Activated naive CD4-positive, alpha-beta T cell treated with anti-CD3 and anti-CD28 coated beads for 36 hours (primary cell): ENCODE measurements at regions of chr12 and their contacts with region 1.

Region 1: DNA sequence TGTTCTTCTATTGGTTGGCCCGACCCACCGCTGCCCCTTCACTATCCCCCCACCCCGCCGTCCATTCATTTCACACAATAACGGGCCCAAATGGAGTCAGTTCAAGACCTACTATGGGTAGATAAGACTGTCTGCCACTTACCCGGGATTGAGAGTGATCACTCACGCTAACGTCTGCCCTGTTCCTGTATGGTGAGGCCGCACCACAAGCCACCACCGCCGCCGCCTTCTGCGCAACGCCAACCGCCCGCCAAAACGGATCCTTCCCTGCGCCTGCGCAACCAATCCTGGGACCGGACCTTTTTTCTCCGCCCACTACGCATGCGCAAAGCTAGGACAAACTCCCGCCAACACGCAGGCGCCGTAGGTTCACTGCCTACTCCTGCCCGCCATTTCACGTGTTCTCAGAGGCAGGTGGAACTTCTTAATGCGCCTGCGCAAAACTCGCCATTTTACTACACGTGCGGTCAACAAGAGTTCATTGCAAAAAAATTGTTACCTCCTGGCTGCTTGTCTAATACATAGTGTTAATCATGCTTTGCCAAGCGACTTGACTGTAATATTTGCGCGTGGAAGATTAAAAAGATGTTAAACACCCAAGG is at the start of gene CBX5:
- DNase-seq: peak; percentile 100
- H3K4me3 Mint-ChIP-seq: no peak within 1 kb of the TSS
- H3K27ac Mint-ChIP-seq: no peak within 1 kb of the TSS
- H3K4me1 Mint-ChIP-seq: peaks cover 53% of the 10 kb centered on the region
- H3K27me3 Mint-ChIP-seq: no peaks in the 10 kb centered on the region
- total RNA-seq, gene CBX5: 169 to 173 TPM

Region 2: DNA sequence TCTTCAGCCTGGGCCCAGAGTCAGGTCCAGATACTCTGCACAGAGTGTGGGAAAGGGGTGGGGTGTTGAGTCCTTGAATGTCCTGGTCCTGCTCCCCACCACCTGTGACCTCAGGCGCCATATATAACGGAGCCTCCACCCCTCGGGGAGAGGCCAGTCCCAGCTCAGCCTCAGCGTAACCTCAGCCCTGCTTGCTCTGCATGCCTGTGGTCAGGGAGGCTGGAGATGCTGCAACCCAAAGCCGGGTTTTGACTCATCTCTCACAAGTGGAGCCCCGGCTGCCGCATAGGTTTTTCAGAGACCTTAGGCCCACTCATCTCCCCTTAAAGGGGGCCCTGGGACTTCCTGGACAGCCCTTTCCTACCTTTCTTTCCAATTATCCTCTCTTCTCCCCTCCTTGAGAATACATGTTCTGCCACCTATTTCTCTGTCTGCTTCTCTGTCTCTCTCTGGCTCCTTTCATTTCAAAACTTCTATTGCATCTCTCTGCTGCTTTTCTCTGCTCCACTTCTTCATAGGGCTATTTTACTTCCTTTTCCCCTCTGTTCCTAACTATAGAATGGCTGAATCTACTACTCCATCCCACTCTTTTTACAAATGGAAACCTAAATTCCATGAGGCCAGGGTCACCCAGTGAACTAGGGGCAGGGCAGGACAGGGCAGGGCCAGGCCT is 1074.1 kb before region 1 on chr12:
- CTCF ChIA-PET with region 1: no interaction called
- intact Hi-C with region 1: loop called (anchors 5 kb)
- DNase-seq: peak; percentile 88
- H3K4me3 Mint-ChIP-seq: peak overlapping the region; percentile 65
- H3K27ac Mint-ChIP-seq: peak overlapping the region; percentile 79
- H3K4me1 Mint-ChIP-seq: peaks cover 75% of the 10 kb centered on the region
- H3K27me3 Mint-ChIP-seq: no peaks in the 10 kb centered on the region

Region 3: DNA sequence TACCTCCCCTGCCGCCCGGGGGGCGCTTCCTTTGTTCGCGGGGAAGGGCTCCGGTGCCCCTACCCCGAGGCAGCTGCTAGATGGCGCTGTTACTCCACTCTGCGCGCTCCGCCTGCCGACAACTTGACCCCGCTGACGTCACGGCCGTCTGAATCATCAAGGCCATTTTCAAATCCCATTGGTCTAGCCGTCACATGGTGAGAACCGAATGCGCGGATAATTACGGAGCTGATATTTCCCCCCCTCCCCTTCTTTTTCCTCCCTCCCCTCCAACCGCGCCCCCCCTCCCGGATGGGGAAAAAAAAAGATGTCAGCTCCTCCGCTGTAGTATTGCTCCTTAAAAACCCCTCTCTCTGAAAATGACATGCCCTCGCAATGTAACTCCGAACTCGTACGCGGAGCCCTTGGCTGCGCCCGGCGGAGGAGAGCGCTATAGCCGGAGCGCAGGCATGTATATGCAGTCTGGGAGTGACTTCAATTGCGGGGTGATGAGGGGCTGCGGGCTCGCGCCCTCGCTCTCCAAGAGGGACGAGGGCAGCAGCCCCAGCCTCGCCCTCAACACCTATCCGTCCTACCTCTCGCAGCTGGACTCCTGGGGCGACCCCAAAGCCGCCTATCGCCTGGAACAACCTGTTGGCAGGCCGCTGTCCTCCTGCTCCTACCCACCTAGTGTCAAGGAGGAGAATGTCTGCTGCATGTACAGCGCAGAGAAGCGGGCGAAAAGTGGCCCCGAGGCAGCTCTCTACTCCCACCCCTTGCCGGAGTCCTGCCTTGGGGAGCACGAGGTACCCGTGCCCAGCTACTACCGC is 294.9 kb before region 1 on chr12 and contains the start of gene HOXC10:
- CTCF ChIA-PET with region 1: no interaction called
- intact Hi-C with region 1: loop called (anchors 5 kb)
- DNase-seq: peak; percentile 95
- H3K4me3 Mint-ChIP-seq: peak within 1 kb of the TSS; percentile 38
- H3K27ac Mint-ChIP-seq: no peak within 1 kb of the TSS
- H3K4me1 Mint-ChIP-seq: peaks cover 28% of the 10 kb centered on the region
- H3K27me3 Mint-ChIP-seq: peaks cover 91% of the 10 kb centered on the region
- total RNA-seq, gene HOXC10: not detected

Region 4: GRCh38 chr12:54214553-54215406 is 65.2 kb before region 1 on chr12:
- CTCF ChIA-PET with region 1: interaction called, 4 read pairs
- intact Hi-C with region 1: loop called (anchors 2 kb)
- DNase-seq: peak; percentile 95
- H3K4me3 Mint-ChIP-seq: peak overlapping the region; percentile 61
- H3K27ac Mint-ChIP-seq: no peak overlapping the region
- H3K4me1 Mint-ChIP-seq: peaks cover 21% of the 10 kb centered on the region
- H3K27me3 Mint-ChIP-seq: peaks cover 4% of the 10 kb centered on the region

Region 5: GRCh38 chr12:54359033-54359761 is 79.2 kb after region 1 on chr12:
- CTCF ChIA-PET with region 1: interaction called, 3 read pairs
- intact Hi-C with region 1: loop called (anchors 1 kb)
- DNase-seq: peak; percentile 98
- H3K4me3 Mint-ChIP-seq: no peak overlapping the region
- H3K27ac Mint-ChIP-seq: no peak overlapping the region
- H3K4me1 Mint-ChIP-seq: peaks cover 19% of the 10 kb centered on the region
- H3K27me3 Mint-ChIP-seq: no peaks in the 10 kb centered on the region

Region 6: GRCh38 chr12:54526812-54527630 is 247.1 kb after region 1 on chr12:
- CTCF ChIA-PET with region 1: no interaction called
- intact Hi-C with region 1: loop called (anchors 1 kb)
- DNase-seq: peak; percentile 72
- H3K4me3 Mint-ChIP-seq: no peak overlapping the region
- H3K27ac Mint-ChIP-seq: peak overlapping the region; percentile 46
- H3K4me1 Mint-ChIP-seq: peaks cover 22% of the 10 kb centered on the region
- H3K27me3 Mint-ChIP-seq: no peaks in the 10 kb centered on the region